ENCODE measurements at regions of chr22 and their contacts with region 1.

Region 1: DNA sequence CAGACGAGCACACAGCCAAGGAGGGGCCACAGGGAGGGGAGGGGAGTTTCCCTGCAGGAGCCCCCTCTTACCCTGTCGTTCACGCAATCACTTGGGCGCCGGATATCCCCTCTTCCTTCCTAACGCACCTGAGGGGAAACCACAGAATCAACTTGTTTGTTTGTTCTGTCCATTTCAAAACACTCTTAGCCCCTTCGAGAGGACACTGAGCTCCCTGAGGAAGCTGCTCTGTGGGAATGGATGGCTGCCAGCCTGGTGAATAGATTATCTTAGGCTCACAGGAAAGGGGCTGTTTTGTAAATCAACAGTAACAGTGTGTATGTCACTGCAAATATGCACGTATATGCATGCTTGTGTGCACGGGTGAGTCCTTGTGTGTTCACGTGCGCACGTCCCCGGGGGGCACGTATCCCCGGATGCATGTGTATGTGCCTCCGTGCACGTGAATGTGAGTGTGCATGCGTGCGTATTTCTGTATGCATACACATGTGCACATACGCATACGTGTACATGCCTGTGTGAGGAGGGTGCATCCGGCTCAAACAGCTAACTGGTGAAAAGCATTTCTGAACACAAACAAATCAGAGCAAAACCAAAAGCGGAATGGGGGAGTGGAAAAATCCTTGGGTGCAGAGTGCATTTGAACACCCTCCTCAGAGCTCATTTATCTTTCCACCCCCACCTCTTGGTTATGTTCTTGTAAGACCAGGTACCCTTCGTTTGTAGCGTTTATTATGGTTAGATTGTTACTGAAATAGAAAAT is 7.2 kb downstream of the ARSA start:
- DNase-seq: peak; percentile 92
- H3K4me3 ChIP-seq: peak overlapping the region; percentile 44 to 61
- H3K27ac ChIP-seq: no peak overlapping the region
- H3K4me1 ChIP-seq: peaks cover 0 to 16% of the 10 kb centered on the region in 2 experiments; a peak in 2 of 4 replicates
- H3K27me3 ChIP-seq: no peaks in the 10 kb centered on the region
- CTCF ChIP-seq: no peak; the same call in 1 of the 2 replicates
- EP300 ChIP-seq: no peak
- RAD21 ChIP-seq: no peak

Region 2: DNA sequence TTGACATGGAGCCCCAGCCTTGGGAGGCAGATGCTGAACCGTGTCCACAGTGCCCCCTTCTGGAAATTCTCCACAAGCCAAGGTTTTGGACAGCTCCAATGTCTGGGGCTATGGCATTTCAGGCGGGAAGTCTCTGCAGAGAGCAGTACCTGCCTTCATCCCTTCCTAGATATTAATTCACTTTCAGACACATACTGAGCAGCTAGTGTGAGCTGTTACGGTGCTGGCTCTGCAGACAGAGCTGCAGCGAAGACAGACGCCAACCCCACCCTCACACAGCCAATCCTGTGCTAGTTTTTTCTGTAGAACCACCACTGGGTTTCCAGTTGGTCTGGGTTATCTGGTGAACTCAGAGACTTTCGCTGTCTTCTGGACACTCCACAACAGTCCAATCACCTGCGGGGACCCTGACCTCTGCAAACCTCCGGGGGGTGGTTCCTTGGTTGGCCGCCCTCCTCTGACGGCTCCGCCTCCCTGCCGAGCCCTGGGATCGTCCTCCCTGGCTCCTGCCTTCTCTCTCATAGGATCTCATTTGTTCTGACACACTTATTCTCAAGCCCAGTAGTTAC is 122.4 kb before region 1 on chr22:
- CTCF ChIA-PET with region 1: interaction called, 12 read pairs
- POLR2A ChIA-PET with region 1: no interaction called
- DNase-seq: peak; percentile 77
- H3K4me3 ChIP-seq: no peak overlapping the region; a peak in 1 of 4 replicates
- H3K27ac ChIP-seq: no peak overlapping the region
- H3K4me1 ChIP-seq: no peaks in the 10 kb centered on the region; a peak in 1 of 4 replicates
- H3K27me3 ChIP-seq: no peaks in the 10 kb centered on the region
- CTCF ChIP-seq: peak; percentile 69
- EP300 ChIP-seq: no peak
- RAD21 ChIP-seq: peak; percentile 77

Region 3: GRCh38 chr22:50544078-50544745 is 76.6 kb before region 1 on chr22:
- CTCF ChIA-PET with region 1: interaction called, 11 read pairs
- POLR2A ChIA-PET with region 1: no interaction called
- DNase-seq: peak; percentile 83
- H3K4me3 ChIP-seq: no peak overlapping the region
- H3K27ac ChIP-seq: no peak overlapping the region
- H3K4me1 ChIP-seq: peaks cover 6 to 9% of the 10 kb centered on the region in 2 experiments; a peak in 2 of 4 replicates
- H3K27me3 ChIP-seq: no peaks in the 10 kb centered on the region
- CTCF ChIP-seq: no peak
- EP300 ChIP-seq: no peak
- RAD21 ChIP-seq: no peak

Region 4: DNA sequence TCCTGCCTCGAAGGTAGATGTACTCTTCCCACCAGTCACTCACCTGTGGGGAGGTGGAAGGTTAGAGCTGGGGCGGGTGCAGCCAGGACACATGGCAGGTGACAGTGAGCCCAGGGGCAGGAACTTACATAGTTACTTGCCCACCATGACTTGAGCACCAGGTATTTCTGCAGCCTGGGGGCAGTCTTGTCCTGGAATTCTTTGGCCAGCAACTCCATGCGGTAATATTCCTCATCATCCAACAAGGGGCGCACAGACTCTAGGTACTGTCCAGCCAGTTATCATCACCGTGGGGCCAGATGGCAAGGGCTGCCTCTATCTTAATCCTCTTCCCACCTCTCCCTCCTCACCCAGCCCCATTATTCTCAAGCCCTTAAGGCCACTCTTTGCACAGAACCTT is 44.7 kb before region 1 on chr22:
- CTCF ChIA-PET with region 1: interaction called, 16 read pairs
- POLR2A ChIA-PET with region 1: interaction called, 3 read pairs
- DNase-seq: peak; percentile 64
- H3K4me3 ChIP-seq: no peak overlapping the region; a peak in 1 of 4 replicates
- H3K27ac ChIP-seq: no peak overlapping the region
- H3K4me1 ChIP-seq: peaks cover 0 to under 1% of the 10 kb centered on the region in 2 experiments; a peak in 1 of 4 replicates
- H3K27me3 ChIP-seq: no peaks in the 10 kb centered on the region
- CTCF ChIP-seq: peak; percentile 42
- EP300 ChIP-seq: no peak
- RAD21 ChIP-seq: peak; percentile 63

Region 5: GRCh38 chr22:50600967-50601668 is 19.7 kb before region 1 on chr22:
- CTCF ChIA-PET with region 1: interaction called, 17 read pairs
- POLR2A ChIA-PET with region 1: interaction called, 3 read pairs
- DNase-seq: peak; percentile 90
- H3K4me3 ChIP-seq: peak overlapping the region in 1 of 2 experiments; percentile 56; a peak in 3 of 4 replicates
- H3K27ac ChIP-seq: peak overlapping the region in 1 of 2 experiments; percentile 62; a peak in 2 of 4 replicates
- H3K4me1 ChIP-seq: peaks cover 0 to 10% of the 10 kb centered on the region in 2 experiments; a peak in 1 of 4 replicates
- H3K27me3 ChIP-seq: no peaks in the 10 kb centered on the region
- CTCF ChIP-seq: no peak
- EP300 ChIP-seq: no peak
- RAD21 ChIP-seq: no peak

Measured in SK-N-SH (cell line).